Heart right ventricle (tissue), 16 donors: ENCODE measurements at regions of chr18 and their contacts with region 1.

Region 1: DNA sequence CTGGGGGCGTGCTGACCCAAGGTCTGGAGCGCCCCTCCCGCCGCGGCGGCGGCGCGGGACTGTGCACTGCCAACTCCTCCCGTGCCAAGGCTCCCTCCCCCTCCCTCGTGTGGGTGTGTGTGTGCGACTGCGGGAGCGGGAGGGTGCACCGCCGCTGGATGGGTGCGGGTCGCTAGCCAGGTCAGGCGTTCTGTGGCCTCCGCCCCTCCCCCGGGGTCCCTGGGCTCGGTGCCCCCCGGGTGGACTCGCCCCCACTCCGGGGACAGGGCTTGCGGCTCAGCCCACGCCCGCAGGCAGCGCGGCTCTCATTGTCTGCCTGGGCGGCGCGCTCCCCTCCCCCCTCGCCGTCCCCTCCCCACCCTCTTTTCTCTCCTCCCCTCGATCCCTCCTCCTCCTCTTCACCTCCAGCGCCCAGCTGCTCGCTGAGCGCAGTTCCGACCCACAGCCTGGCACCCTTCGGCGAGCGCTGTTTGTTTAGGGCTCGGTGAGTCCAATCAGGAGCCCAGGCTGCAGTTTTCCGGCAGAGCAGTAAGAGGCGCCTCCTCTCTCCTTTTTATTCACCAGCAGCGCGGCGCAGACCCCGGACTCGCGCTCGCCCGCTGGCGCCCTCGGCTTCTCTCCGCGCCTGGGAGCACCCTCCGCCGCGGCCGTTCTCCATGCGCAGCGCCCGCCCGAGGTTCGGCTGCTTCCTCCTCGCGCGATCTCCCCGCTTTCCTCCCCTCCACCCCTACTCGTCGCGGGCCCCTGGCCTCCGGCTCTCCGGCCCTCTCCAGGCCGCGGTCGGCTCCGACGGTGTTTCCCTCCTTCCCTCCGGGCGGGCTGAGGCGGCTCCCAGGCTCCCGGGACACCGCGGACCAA is at the start of gene GATA6:
- DNase-seq: peak; percentile 89 to 90
- ATAC-seq: peak; percentile 59 to 87 (median 72)
- H3K4me3 ChIP-seq: peak within 1 kb of the TSS; percentile 71 to 97 (median 93)
- H3K27ac ChIP-seq: peak within 1 kb of the TSS; percentile 92 to 100 (median 98)
- H3K4me1 ChIP-seq: peaks cover 0 to 43% (median 29%) of the 10 kb centered on the region in 9 donors
- H3K27me3 ChIP-seq: peaks cover 0 to 96% (median 37%) of the 10 kb centered on the region in 7 donors
- CTCF ChIP-seq: peak in 7 of 9 donors; percentile 25 to 68 (median 53)
- total RNA-seq, gene GATA6: 54.6 to 99.5 (median 73.4) TPM

Region 2: GRCh38 chr18:21904856-21905255 is 264.4 kb before region 1 on chr18:
- intact Hi-C with region 1: loop called in 5 of 10 experiments (anchors 5 to 10 kb)
- DNase-seq: no peak
- ATAC-seq: no peak
- H3K4me3 ChIP-seq: no peak overlapping the region
- H3K27ac ChIP-seq: no peak overlapping the region
- H3K4me1 ChIP-seq: peaks cover 0 to 9% (median 0%) of the 10 kb centered on the region in 9 donors
- H3K27me3 ChIP-seq: no peaks in the 10 kb centered on the region
- CTCF ChIP-seq: no peak

Region 3: GRCh38 chr18:22005191-22005841 is 163.9 kb before region 1 on chr18:
- intact Hi-C with region 1: loop called in 1 of 10 experiments (anchors 5 kb)
- DNase-seq: no peak
- ATAC-seq: peak in 3 of 8 donors; percentile 46 to 69 (median 47)
- H3K4me3 ChIP-seq: no peak overlapping the region
- H3K27ac ChIP-seq: peak overlapping the region in 2 of 10 donors; percentile 37 to 47
- H3K4me1 ChIP-seq: peaks cover 0 to 9% (median under 1%) of the 10 kb centered on the region in 9 donors
- H3K27me3 ChIP-seq: no peaks in the 10 kb centered on the region
- CTCF ChIP-seq: no peak

Region 4: DNA sequence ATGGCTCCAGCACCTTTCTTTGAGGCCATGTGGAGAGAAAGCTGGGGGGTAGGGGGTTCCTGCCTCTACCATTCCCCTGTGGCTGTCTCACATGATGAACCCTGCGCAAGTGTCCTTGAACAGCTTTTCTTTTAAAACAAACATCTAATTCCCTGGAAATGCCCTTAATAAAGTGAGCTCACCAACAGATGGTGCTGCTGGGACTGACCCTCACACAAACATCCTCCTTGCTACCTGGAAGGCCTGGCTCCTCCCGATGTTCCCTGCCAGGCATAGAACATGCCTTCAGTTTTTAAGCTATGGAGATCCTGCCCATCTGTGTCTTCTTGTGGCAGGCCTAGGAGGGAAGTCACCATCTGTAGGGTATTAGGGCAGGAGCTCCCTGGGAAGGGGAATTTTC is 60.6 kb before region 1 on chr18:
- intact Hi-C with region 1: loop called in 1 of 10 experiments (anchors 10 kb)
- DNase-seq: no peak
- ATAC-seq: no peak
- H3K4me3 ChIP-seq: no peak overlapping the region
- H3K27ac ChIP-seq: no peak overlapping the region
- H3K4me1 ChIP-seq: peaks cover 0 to 12% (median 2%) of the 10 kb centered on the region in 9 donors
- H3K27me3 ChIP-seq: no peaks in the 10 kb centered on the region
- CTCF ChIP-seq: peak in 3 of 9 donors; percentile 6 to 26 (median 18)

Region 5: GRCh38 chr18:22348521-22349316 is 179.5 kb after region 1 on chr18:
- intact Hi-C with region 1: loop called in 7 of 10 experiments (anchors 1 to 10 kb)
- DNase-seq: peak; percentile 68 to 81
- ATAC-seq: peak; percentile 67 to 79 (median 74)
- H3K4me3 ChIP-seq: peak overlapping the region; percentile 18 to 65 (median 58)
- H3K27ac ChIP-seq: peak overlapping the region; percentile 88 to 97 (median 94)
- H3K4me1 ChIP-seq: peaks cover 10 to 64% (median 44%) of the 10 kb centered on the region in 9 donors
- H3K27me3 ChIP-seq: peaks cover 0 to 45% (median 0%) of the 10 kb centered on the region in 7 donors
- CTCF ChIP-seq: peak in 1 of 9 donors; percentile 17

Region 6: GRCh38 chr18:22471546-22472131 is 302.4 kb after region 1 on chr18:
- intact Hi-C with region 1: loop called in 4 of 10 experiments (anchors 5 to 10 kb)
- DNase-seq: peak; percentile 51 to 82
- ATAC-seq: peak; percentile 83 to 95 (median 90)
- H3K4me3 ChIP-seq: no peak overlapping the region
- H3K27ac ChIP-seq: peak overlapping the region; percentile 77 to 92 (median 84)
- H3K4me1 ChIP-seq: peaks cover 21 to 56% (median 51%) of the 10 kb centered on the region in 9 donors
- H3K27me3 ChIP-seq: no peaks in the 10 kb centered on the region
- CTCF ChIP-seq: no peak